IMR-90 (cell line): ENCODE measurements at regions of chr4 and their contacts with region 1.

Region 1: GRCh38 chr4:128454281-128455075 is 166.9 kb upstream of the PGRMC2 start:
- DNase-seq: peak; percentile 97
- ATAC-seq: peak; percentile 95
- H3K4me3 ChIP-seq: peak overlapping the region; percentile 10; the same call in 1 of the 2 replicates
- H3K27ac ChIP-seq: peak overlapping the region; percentile 77
- H3K4me1 ChIP-seq: peaks cover 20% of the 10 kb centered on the region
- H3K27me3 ChIP-seq: no peaks in the 10 kb centered on the region
- CTCF ChIP-seq: peak; percentile 95
- POLR2A ChIP-seq: peak; percentile 44; the same call in 1 of the 2 replicates
- RAD21 ChIP-seq: peak; percentile 98

Region 2: GRCh38 chr4:128163177-128164117 is 291.0 kb before region 1 on chr4:
- CTCF ChIA-PET with region 1: no interaction called
- POLR2A ChIA-PET with region 1: no interaction called
- dilution Hi-C with region 1: no loop called
- in situ Hi-C with region 1: no loop called
- intact Hi-C with region 1: no loop called
- DNase-seq: peak; percentile 87
- ATAC-seq: peak; percentile 31
- H3K4me3 ChIP-seq: no peak overlapping the region
- H3K27ac ChIP-seq: peak overlapping the region; percentile 87
- H3K4me1 ChIP-seq: peaks cover 13% of the 10 kb centered on the region
- H3K27me3 ChIP-seq: no peaks in the 10 kb centered on the region
- CTCF ChIP-seq: no peak
- POLR2A ChIP-seq: no peak
- RAD21 ChIP-seq: no peak

Region 3: DNA sequence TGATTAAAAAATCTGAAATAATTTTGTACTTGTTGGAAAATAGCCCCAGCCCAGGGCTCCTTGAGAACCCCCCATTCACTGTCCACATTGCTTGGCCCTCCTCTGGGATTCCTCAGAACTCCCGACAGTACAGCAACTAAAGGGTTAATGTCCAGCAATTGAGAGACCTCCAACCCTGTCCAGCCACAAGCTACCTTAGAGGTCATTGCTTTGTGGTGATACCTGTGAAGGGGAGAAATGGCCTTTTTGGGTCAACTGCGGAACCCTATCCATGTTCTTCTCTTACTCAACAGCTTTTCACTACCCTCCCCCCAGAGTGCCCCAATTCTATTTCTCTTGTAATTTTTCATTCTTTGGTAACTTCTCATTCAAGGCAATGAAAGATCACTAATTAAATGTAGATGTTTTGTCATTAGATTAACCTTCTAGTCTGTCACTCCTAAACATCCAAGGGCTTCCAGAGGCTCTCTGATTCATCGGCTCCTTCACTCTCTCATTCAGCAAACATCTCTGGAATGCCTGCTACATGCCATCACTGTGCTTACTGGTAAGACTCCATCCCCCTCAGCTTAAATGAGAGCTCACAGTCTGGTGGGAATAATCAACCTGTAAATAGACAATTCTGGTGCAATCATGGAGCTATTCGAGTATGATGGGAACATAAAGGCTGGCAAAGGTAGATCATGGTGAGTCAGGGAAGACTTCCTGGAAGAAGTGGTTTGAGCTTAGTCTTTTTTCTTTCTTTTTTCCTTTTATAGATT is 74.5 kb after region 1 on chr4:
- CTCF ChIA-PET with region 1: no interaction called
- POLR2A ChIA-PET with region 1: no interaction called
- dilution Hi-C with region 1: no loop called
- in situ Hi-C with region 1: no loop called
- intact Hi-C with region 1: loop called (anchors 2 kb)
- DNase-seq: peak; percentile 99
- ATAC-seq: peak; percentile 94
- H3K4me3 ChIP-seq: no peak overlapping the region
- H3K27ac ChIP-seq: peak overlapping the region; percentile 97
- H3K4me1 ChIP-seq: peaks cover 25% of the 10 kb centered on the region
- H3K27me3 ChIP-seq: no peaks in the 10 kb centered on the region
- CTCF ChIP-seq: no peak
- POLR2A ChIP-seq: no peak
- RAD21 ChIP-seq: peak; percentile 17; the same call in 1 of the 2 replicates

Region 4: DNA sequence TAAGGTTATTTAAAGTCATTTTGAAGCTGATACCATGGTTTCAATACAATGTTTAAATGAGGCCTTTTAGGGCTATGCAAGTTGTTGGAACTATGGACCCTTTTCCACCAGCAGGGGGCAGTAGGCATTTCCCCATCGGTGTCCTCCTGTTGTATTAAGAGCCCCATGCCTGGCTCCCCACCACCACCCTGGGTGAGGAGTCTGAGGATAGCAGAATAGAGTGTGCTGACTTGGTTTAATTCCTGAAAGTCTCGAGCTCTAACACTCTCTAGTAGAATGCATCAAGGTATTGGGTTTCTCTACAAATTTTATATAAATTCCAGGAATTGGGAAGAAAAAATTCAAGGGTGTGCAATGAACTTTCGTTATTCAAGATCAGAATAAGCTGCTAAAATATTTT is 120.2 kb after region 1 on chr4:
- CTCF ChIA-PET with region 1: no interaction called
- POLR2A ChIA-PET with region 1: no interaction called
- dilution Hi-C with region 1: no loop called
- in situ Hi-C with region 1: no loop called
- intact Hi-C with region 1: loop called (anchors 2 kb)
- DNase-seq: peak; percentile 68
- ATAC-seq: peak; percentile 25
- H3K4me3 ChIP-seq: no peak overlapping the region
- H3K27ac ChIP-seq: no peak overlapping the region
- H3K4me1 ChIP-seq: peaks cover 22% of the 10 kb centered on the region
- H3K27me3 ChIP-seq: no peaks in the 10 kb centered on the region
- CTCF ChIP-seq: peak; percentile 58
- POLR2A ChIP-seq: no peak
- RAD21 ChIP-seq: peak; percentile 55

Region 5: DNA sequence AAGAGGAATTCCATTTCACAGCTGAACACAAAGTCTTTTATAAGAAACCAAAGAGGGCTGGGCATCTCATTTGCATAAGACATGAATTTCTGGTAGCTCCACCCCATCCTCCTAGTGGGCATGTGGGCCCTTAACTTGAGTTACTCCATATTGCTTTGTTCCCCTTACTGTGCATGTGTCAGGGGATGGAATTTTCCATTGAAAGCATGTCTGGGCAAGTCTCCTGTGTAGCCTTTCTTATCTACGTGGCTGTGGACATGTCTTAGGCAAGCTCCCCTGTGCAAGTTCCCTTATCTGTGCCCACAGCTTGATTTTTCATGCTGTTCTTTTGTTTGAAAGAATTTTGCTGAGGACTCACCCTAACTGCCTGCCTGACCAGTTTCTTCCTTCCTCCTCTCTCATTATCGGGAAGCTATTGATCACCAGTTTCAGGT is 231.6 kb after region 1 on chr4:
- CTCF ChIA-PET with region 1: no interaction called
- POLR2A ChIA-PET with region 1: no interaction called
- dilution Hi-C with region 1: no loop called
- in situ Hi-C with region 1: no loop called
- intact Hi-C with region 1: no loop called
- DNase-seq: peak; percentile 18
- ATAC-seq: no peak
- H3K4me3 ChIP-seq: no peak overlapping the region
- H3K27ac ChIP-seq: no peak overlapping the region
- H3K4me1 ChIP-seq: no peaks in the 10 kb centered on the region
- H3K27me3 ChIP-seq: no peaks in the 10 kb centered on the region
- CTCF ChIP-seq: no peak
- POLR2A ChIP-seq: no peak
- RAD21 ChIP-seq: no peak

Region 6: GRCh38 chr4:128863312-128864075 is 409.0 kb after region 1 on chr4:
- CTCF ChIA-PET with region 1: interaction called, 3 read pairs
- POLR2A ChIA-PET with region 1: no interaction called
- dilution Hi-C with region 1: no loop called
- in situ Hi-C with region 1: loop called (anchors 5 kb)
- intact Hi-C with region 1: loop called (anchors 1 kb)
- DNase-seq: peak; percentile 80
- ATAC-seq: peak; percentile 65; the same call in 1 of the 2 replicates
- H3K4me3 ChIP-seq: no peak overlapping the region
- H3K27ac ChIP-seq: 0 out of 2 replicates have a peak overlapping the region, but pooled peaks have one; percentile 0
- H3K4me1 ChIP-seq: peaks cover 24% of the 10 kb centered on the region
- H3K27me3 ChIP-seq: no peaks in the 10 kb centered on the region
- CTCF ChIP-seq: peak; percentile 79
- POLR2A ChIP-seq: no peak
- RAD21 ChIP-seq: peak; percentile 78